Activated CD4-positive, alpha-beta T cell treated with anti-CD3 and anti-CD28 coated beads for 36 hours (primary cell): ENCODE measurements at regions of chr6 and their contacts with region 1.

Region 1: GRCh38 chr6:73653571-73654424 is at the start of gene SLC17A5:
- DNase-seq: peak; percentile 94
- ATAC-seq: peak; percentile 91
- H3K4me3 Mint-ChIP-seq: peak within 1 kb of the TSS; percentile 87
- H3K27ac Mint-ChIP-seq: peak within 1 kb of the TSS; percentile 94
- H3K4me1 Mint-ChIP-seq: peaks cover 29% of the 10 kb centered on the region
- H3K27me3 Mint-ChIP-seq: no peaks in the 10 kb centered on the region
- total RNA-seq, gene SLC17A5: 3.2 to 4.0 TPM

Region 2: DNA sequence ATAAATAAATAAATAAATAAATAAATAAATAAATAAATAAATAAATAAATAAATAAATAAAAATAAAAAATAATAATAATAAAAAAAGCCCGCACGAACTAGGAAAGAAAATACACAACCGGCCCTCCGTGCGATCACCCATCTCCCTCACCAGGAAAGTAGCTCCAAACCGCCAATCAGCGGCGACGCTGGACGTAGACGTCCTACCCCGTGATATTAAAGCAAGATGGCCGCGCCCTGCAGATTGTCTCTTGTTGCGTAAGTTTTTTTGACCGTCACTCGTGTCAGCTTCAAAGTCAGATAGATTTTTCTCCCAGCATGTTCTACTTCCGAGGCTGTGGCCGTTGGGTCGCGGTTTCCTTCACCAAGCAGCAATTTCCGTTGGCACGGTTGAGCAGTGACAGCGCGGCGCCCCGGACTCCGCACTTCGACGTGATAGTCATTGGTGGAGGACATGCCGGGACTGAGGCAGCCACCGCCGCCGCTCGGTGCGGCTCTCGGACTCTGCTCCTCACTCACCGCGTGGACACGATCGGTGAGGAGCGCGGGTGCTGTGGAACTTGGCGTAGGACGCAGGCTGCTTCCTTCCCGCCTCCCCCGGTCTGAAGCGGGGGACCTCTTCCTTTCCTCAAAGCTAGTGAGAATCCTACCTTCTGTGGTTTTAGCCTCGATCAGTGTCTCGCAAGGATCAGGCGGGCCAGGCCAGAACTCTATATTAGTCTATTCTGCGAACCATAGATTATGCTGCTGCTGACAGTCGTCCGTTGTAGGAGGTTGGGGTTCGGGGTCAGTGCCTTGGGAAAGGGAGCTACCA is 192.1 kb before region 1 on chr6 and contains the start of gene MTO1:
- CTCF ChIA-PET with region 1: interaction called, 12 read pairs
- POLR2A ChIA-PET with region 1: interaction called, 6 read pairs
- intact Hi-C with region 1: loop called in 1 of 2 experiments (anchors 5 kb)
- DNase-seq: peak; percentile 92
- ATAC-seq: peak; percentile 96
- H3K4me3 Mint-ChIP-seq: peak within 1 kb of the TSS; percentile 93
- H3K27ac Mint-ChIP-seq: peak within 1 kb of the TSS; percentile 100
- H3K4me1 Mint-ChIP-seq: peaks cover 37% of the 10 kb centered on the region
- H3K27me3 Mint-ChIP-seq: no peaks in the 10 kb centered on the region
- total RNA-seq, gene MTO1: 45.0 to 49.7 TPM

Region 3: GRCh38 chr6:73580247-73581149 is 73.3 kb before region 1 on chr6:
- CTCF ChIA-PET with region 1: no interaction called
- POLR2A ChIA-PET with region 1: no interaction called
- intact Hi-C with region 1: loop called (anchors 1 to 5 kb)
- DNase-seq: peak; percentile 89
- ATAC-seq: peak; percentile 92
- H3K4me3 Mint-ChIP-seq: peak overlapping the region; percentile 60
- H3K27ac Mint-ChIP-seq: peak overlapping the region; percentile 99
- H3K4me1 Mint-ChIP-seq: peaks cover 29% of the 10 kb centered on the region
- H3K27me3 Mint-ChIP-seq: no peaks in the 10 kb centered on the region

Region 4: DNA sequence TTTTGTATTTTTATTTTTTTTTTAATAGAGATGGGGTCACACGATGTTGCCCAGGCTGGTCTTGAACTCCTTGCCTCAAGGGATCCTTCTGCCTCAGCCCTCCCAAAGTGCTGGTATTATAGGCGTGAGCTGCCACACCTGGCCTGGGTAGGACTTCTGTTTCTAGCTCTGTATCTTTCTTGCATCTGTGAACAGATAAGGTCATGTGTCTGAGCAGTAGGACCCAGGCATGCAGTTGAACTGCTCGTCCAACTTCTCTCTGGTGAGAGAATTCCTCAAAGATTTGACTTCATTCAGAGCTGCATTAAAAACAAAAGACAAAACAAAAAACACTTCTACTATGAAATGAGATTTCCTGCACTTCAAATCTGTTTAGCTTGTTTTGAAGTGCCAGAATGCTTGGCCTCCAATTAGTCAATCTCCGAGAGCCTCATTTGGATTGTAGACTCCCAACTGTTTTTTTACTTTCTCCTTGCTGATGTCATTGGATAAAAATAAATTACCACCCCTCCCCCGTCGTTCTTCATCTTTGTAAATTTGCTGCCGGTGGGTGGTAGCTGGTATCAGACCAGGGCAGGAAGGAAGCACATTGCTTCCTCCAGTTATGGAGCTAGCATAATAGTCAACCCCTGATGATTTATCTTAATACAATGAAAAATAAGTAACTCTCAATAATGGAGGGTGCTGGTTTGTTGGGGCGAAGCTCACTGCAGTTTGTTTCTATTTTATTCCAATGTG is 59.8 kb after region 1 on chr6:
- CTCF ChIA-PET with region 1: no interaction called
- POLR2A ChIA-PET with region 1: interaction called, 10 read pairs
- intact Hi-C with region 1: no loop called
- DNase-seq: no peak
- ATAC-seq: peak; percentile 70
- H3K4me3 Mint-ChIP-seq: no peak overlapping the region
- H3K27ac Mint-ChIP-seq: peak overlapping the region; percentile 26
- H3K4me1 Mint-ChIP-seq: peaks cover 27% of the 10 kb centered on the region
- H3K27me3 Mint-ChIP-seq: no peaks in the 10 kb centered on the region

Region 5: GRCh38 chr6:73879501-73880293 is 225.9 kb after region 1 on chr6:
- CTCF ChIA-PET with region 1: no interaction called
- POLR2A ChIA-PET with region 1: no interaction called
- intact Hi-C with region 1: no loop called
- DNase-seq: no peak
- ATAC-seq: no peak
- H3K4me3 Mint-ChIP-seq: no peak overlapping the region
- H3K27ac Mint-ChIP-seq: no peak overlapping the region
- H3K4me1 Mint-ChIP-seq: no peaks in the 10 kb centered on the region
- H3K27me3 Mint-ChIP-seq: no peaks in the 10 kb centered on the region

Region 6: GRCh38 chr6:75284632-75285286 is 1631.0 kb after region 1 on chr6 and contains the start of gene TMEM30A:
- CTCF ChIA-PET with region 1: interaction called, 3 read pairs
- POLR2A ChIA-PET with region 1: no interaction called
- intact Hi-C with region 1: loop called in 1 of 2 experiments (anchors 2 kb)
- DNase-seq: peak; percentile 98
- ATAC-seq: peak; percentile 97
- H3K4me3 Mint-ChIP-seq: no peak within 1 kb of the TSS
- H3K27ac Mint-ChIP-seq: no peak within 1 kb of the TSS
- H3K4me1 Mint-ChIP-seq: peaks cover 48% of the 10 kb centered on the region
- H3K27me3 Mint-ChIP-seq: no peaks in the 10 kb centered on the region
- total RNA-seq, gene TMEM30A: 23.4 to 44.3 TPM